Activated CD4-positive, alpha-beta memory T cell treated with anti-CD3 and anti-CD28 coated beads for 36 hours (primary cell): ENCODE measurements at regions of chr15 and their contacts with region 1.

Region 1: GRCh38 chr15:38683382-38684242 is 119.0 kb upstream of the RASGRP1 start:
- DNase-seq: peak; percentile 84
- H3K4me3 Mint-ChIP-seq: peak overlapping the region; percentile 5
- H3K27ac Mint-ChIP-seq: peak overlapping the region; percentile 92
- H3K4me1 Mint-ChIP-seq: peaks cover 71% of the 10 kb centered on the region
- H3K27me3 Mint-ChIP-seq: no peaks in the 10 kb centered on the region

Region 2: DNA sequence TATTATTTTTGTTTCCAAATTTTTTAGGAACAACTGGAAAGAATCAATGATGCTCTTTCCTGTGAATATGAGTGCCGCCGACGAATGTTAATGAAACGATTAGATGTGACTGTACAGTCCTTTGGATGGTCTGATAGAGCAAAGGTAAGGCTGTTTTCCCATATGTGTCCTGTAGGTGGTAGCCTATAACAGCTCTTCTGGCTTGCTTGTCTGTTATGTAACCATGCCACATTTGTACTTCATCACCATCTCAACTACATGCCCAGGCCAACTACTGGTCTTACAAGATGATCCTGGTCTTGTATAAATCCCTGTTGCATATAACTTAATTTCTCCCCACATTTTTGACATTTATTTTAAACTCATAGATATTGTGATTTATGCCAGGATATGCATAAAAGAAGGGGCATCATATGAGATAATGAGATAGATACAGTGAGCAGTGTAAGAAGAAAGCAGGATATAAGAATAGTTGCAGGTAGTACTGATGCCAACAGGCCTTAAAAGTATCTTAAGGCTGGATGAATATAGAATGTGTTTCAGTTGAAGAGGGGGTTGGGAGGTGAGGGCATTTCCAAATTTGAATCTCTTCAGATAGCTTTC is 209.4 kb before region 1 on chr15:
- CTCF ChIA-PET with region 1: interaction called, 54 read pairs
- POLR2A ChIA-PET with region 1: no interaction called
- intact Hi-C with region 1: loop called (anchors 1 kb)
- DNase-seq: no peak
- H3K4me3 Mint-ChIP-seq: no peak overlapping the region
- H3K27ac Mint-ChIP-seq: no peak overlapping the region
- H3K4me1 Mint-ChIP-seq: peaks cover 9% of the 10 kb centered on the region
- H3K27me3 Mint-ChIP-seq: no peaks in the 10 kb centered on the region

Region 3: GRCh38 chr15:38545179-38545578 is 138.4 kb before region 1 on chr15:
- CTCF ChIA-PET with region 1: interaction called, 12 read pairs
- POLR2A ChIA-PET with region 1: interaction called, 4 read pairs
- intact Hi-C with region 1: no loop called
- DNase-seq: no peak
- H3K4me3 Mint-ChIP-seq: no peak overlapping the region
- H3K27ac Mint-ChIP-seq: peak overlapping the region; percentile 34
- H3K4me1 Mint-ChIP-seq: peaks cover 90% of the 10 kb centered on the region
- H3K27me3 Mint-ChIP-seq: no peaks in the 10 kb centered on the region

Region 4: DNA sequence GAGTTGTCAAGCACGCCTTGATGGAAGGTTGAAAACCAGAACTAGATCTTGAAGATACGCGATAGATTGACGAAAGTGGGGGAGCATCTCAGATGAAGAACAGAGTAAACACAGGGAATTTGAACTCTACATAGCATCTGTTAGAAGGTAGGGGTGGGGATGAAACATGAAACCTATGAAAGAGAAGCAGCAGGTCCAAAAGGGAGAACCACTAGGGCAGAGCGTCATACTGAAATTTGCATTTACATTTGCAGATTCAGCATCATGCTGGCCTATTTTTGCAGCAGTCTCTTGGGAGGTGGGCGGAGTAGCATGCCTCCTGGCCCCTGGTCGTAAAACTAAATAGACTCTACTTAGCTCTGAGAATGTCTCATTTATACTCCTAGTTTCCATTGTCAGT is 72.9 kb before region 1 on chr15:
- CTCF ChIA-PET with region 1: interaction called, 151 read pairs
- POLR2A ChIA-PET with region 1: interaction called, 145 read pairs
- intact Hi-C with region 1: loop called (anchors 1 kb)
- DNase-seq: peak; percentile 80
- H3K4me3 Mint-ChIP-seq: peak overlapping the region; percentile 37
- H3K27ac Mint-ChIP-seq: peak overlapping the region; percentile 99
- H3K4me1 Mint-ChIP-seq: peaks cover 83% of the 10 kb centered on the region
- H3K27me3 Mint-ChIP-seq: no peaks in the 10 kb centered on the region

Region 5: DNA sequence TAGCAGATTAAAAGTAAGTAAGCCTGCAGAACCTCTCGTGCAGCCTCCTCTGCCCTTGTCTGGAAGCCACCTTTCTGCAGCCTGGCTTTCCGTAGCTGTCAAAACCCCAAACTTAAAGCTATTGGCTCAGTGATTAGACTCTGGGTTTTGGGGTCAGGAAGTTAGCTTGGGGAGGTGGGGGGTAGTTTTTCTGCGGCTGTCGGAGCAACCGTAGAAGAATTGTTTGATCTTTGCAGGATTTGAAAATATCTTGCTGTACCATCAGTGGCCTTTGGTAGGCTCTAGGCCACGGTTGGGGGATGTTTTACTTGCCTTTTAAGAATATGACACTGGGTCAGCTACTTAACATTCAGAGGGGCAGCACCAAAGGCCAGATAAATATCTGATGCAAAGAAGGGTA is 30.6 kb before region 1 on chr15:
- CTCF ChIA-PET with region 1: interaction called, 20 read pairs
- POLR2A ChIA-PET with region 1: interaction called, 5 read pairs
- intact Hi-C with region 1: loop called (anchors 1 kb)
- DNase-seq: peak; percentile 83
- H3K4me3 Mint-ChIP-seq: peak overlapping the region; percentile 77
- H3K27ac Mint-ChIP-seq: peak overlapping the region; percentile 93
- H3K4me1 Mint-ChIP-seq: peaks cover 77% of the 10 kb centered on the region
- H3K27me3 Mint-ChIP-seq: no peaks in the 10 kb centered on the region

Region 6: GRCh38 chr15:38758043-38758442 is 74.4 kb after region 1 on chr15:
- CTCF ChIA-PET with region 1: no interaction called
- POLR2A ChIA-PET with region 1: no interaction called
- intact Hi-C with region 1: no loop called
- DNase-seq: no peak
- H3K4me3 Mint-ChIP-seq: no peak overlapping the region
- H3K27ac Mint-ChIP-seq: no peak overlapping the region
- H3K4me1 Mint-ChIP-seq: no peaks in the 10 kb centered on the region
- H3K27me3 Mint-ChIP-seq: peaks cover 13% of the 10 kb centered on the region